Dendritic cell treated with granulocyte-macrophage colony-stimulating factor and Interleukin-4, amounts not matched to agents 40 ng/mL and 50 ng/mL, for 4 days (primary cell): ENCODE measurements at regions of chr6 and their contacts with region 1.

Region 1: DNA sequence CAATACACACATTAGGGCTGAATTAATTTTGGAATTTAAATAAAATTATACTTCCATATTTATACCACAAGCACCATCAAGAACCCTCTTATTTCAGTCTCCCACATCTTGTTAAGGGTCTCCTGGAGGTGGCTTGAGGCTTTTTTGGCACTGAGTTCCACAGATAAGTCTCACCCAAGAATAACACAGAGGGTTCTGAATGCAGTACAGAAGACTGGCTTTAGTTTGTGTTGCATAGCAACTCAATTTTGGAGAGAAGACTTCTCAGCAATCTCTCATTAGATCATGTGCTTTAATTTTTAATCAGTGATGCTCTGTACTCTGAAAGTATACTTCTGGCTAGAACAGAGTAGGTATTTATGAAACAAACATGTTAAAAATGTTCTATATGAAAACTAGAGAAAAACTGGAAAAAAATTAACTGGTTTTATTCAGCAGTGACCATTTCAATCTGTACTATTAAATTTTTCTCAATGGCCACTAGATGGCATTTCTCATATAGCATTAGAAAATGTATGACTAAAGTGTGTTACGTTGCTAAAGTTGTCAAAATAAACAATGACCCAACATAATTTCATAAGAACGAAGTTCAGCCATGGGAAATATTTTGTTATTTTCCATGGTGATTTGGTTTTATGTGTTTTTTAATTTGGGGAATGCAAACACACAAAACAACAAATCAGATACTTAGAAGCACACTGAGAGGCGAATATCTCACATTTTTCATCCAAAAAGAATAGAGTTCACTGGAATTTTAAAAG is 32.7 kb upstream of the MAP7 start:
- H3K4me3 Mint-ChIP-seq: no peak overlapping the region
- H3K27ac Mint-ChIP-seq: peak overlapping the region; percentile 74
- H3K4me1 Mint-ChIP-seq: peaks cover 11% of the 10 kb centered on the region
- H3K27me3 Mint-ChIP-seq: no peaks in the 10 kb centered on the region

Region 2: DNA sequence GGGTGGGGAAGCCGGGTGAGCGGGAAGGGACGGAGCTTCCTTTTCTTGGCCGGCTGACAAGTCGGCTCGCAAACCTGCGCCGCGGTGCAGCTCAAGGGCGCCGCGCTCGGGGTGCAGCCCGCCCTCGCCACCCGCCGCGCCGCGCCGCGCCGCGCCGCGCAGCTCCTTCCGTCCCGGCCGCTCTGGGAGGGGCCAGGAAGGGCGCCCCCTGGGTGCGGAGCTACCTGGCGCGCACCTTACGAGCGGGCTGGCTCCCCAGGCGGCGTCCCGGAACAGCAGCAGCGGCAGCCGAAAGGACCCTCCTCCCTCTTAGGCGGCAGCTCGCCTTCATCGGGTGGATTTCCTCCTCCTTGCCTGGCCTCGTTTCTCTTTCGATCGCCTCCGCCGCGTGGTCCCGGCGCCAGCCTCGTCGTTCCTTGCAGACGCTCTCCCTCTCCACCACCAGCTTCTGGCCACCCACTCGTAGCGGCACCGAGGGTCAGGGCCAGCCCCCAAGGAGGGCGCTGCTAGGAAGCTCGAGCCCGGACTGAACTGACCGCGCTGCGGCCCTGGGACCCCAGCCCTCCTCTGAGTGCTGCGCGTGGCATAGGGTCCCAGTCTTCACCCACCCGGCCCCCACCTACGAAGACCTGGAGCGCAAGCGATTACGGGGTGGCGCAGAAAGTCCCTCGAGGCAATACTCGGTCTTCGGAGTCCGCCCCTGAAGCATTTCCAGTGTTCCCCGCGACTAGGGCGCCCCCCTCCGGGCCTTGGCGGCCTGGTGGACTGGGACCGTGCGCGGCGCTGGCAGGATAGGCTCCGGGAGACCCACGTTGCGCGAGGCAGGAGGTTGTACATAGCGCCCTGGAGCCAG is 209.7 kb after region 1 on chr6 and contains the start of gene MAP3K5:
- intact Hi-C with region 1: loop called (anchors 10 kb)
- H3K4me3 Mint-ChIP-seq: peak within 1 kb of the TSS; percentile 99
- H3K27ac Mint-ChIP-seq: peak within 1 kb of the TSS; percentile 99
- H3K4me1 Mint-ChIP-seq: peaks cover 50% of the 10 kb centered on the region
- H3K27me3 Mint-ChIP-seq: no peaks in the 10 kb centered on the region